ENCODE measurements at regions of chr7 and their contacts with region 1.

Region 1: GRCh38 chr7:143008007-143008901 is 18.7 kb downstream of the OR9A2 start:
- DNase-seq: peak; percentile 89
- H3K4me3 Mint-ChIP-seq: no peak overlapping the region
- H3K27ac Mint-ChIP-seq: no peak overlapping the region
- H3K4me1 Mint-ChIP-seq: peaks cover 3% of the 10 kb centered on the region
- H3K27me3 Mint-ChIP-seq: peaks cover 2% of the 10 kb centered on the region

Region 2: DNA sequence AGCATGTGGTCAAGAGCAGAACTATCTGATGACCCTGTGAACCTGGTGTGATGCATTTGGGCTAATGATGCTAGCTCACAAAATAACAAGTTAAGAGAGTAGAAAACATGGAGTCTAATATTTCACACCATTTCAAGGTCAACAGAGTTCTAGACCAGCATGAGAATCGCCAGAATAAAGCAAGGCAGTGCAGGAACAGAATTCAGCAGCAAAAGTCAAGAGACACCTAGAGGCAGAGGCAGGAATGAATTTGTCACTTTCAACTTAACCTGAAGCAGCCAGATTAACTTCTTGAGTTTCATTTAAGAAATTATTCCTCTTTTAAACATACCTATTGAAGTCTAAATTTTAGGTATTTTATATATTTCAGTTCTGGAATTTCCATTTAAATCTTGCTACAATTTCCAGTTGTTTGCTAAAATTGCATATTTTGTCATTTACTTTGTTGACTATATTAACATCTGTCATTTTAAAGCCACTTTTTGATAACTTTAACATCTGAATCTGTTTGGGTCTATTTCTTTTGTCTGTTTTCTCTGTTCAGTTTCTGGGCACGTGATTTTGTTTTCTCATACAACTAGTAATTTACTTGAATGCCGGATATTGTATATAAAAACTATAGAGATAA is 706.2 kb before region 1 on chr7:
- CTCF ChIA-PET with region 1: interaction called, 17 read pairs
- intact Hi-C with region 1: loop called (anchors 1 kb)
- DNase-seq: no peak
- H3K4me3 Mint-ChIP-seq: no peak overlapping the region
- H3K27ac Mint-ChIP-seq: no peak overlapping the region
- H3K4me1 Mint-ChIP-seq: peaks cover 30% of the 10 kb centered on the region
- H3K27me3 Mint-ChIP-seq: peaks cover 11% of the 10 kb centered on the region

Region 3: GRCh38 chr7:142438235-142438922 is 569.9 kb before region 1 on chr7:
- CTCF ChIA-PET with region 1: no interaction called
- intact Hi-C with region 1: loop called (anchors 10 kb)
- DNase-seq: peak; percentile 47
- H3K4me3 Mint-ChIP-seq: no peak overlapping the region
- H3K27ac Mint-ChIP-seq: no peak overlapping the region
- H3K4me1 Mint-ChIP-seq: peaks cover 56% of the 10 kb centered on the region
- H3K27me3 Mint-ChIP-seq: no peaks in the 10 kb centered on the region

Region 4: GRCh38 chr7:142535123-142535779 is 473.0 kb before region 1 on chr7:
- CTCF ChIA-PET with region 1: interaction called, 4 read pairs
- intact Hi-C with region 1: loop called (anchors 1 kb)
- DNase-seq: peak; percentile 91
- H3K4me3 Mint-ChIP-seq: peak overlapping the region; percentile 64
- H3K27ac Mint-ChIP-seq: peak overlapping the region; percentile 86
- H3K4me1 Mint-ChIP-seq: peaks cover 29% of the 10 kb centered on the region
- H3K27me3 Mint-ChIP-seq: no peaks in the 10 kb centered on the region

Region 5: GRCh38 chr7:142853739-142854371 is 154.4 kb before region 1 on chr7:
- CTCF ChIA-PET with region 1: interaction called, 24 read pairs
- intact Hi-C with region 1: loop called (anchors 1 kb)
- DNase-seq: peak; percentile 74
- H3K4me3 Mint-ChIP-seq: peak overlapping the region; percentile 91
- H3K27ac Mint-ChIP-seq: peak overlapping the region; percentile 79
- H3K4me1 Mint-ChIP-seq: peaks cover 31% of the 10 kb centered on the region
- H3K27me3 Mint-ChIP-seq: no peaks in the 10 kb centered on the region

Region 6: DNA sequence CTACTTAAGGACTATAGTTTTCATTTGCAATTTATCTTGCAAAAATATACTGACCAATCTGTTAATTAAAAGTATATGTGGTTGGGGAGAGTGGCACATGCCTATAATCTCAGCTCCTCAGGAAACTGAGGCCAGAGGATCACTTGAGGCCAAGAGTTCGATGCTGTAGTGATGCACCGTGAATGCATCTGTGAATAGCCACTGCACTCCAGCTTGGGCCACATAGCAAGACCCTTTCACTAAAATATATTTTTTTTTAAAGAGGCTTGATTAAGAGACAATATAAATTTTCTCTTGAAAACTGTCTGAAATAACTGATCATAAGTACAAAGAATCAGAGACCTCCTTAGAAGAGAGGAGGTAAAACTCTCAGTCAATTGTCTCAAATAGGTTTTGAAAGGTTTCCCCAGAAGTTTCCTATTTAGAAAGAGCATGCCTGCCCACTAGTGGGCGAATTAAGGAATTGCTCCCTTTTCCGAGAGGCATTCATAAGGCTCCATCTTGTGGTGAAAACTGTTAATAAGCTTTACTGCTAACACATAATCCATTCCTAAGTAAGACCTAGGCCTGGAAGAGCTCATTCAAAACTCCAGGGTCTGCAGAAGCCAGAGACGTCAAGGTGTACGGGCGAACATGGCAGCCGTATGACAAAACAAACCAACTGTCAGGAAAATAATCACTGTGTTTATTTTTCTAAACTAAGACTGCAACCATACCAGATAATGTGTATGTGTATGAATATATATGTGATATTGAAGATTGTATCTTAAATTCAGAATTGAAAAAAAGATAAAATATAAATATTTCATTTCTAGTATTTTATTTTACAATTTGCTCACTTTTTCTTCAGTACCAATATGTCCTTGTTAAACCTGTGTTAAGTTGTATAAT is 206.8 kb after region 1 on chr7:
- CTCF ChIA-PET with region 1: interaction called, 329 read pairs
- intact Hi-C with region 1: loop called (anchors 1 kb)
- DNase-seq: peak; percentile 73
- H3K4me3 Mint-ChIP-seq: no peak overlapping the region
- H3K27ac Mint-ChIP-seq: no peak overlapping the region
- H3K4me1 Mint-ChIP-seq: no peaks in the 10 kb centered on the region
- H3K27me3 Mint-ChIP-seq: no peaks in the 10 kb centered on the region